ENCODE measurements at regions of chr6 and their contacts with region 1.

Region 1: DNA sequence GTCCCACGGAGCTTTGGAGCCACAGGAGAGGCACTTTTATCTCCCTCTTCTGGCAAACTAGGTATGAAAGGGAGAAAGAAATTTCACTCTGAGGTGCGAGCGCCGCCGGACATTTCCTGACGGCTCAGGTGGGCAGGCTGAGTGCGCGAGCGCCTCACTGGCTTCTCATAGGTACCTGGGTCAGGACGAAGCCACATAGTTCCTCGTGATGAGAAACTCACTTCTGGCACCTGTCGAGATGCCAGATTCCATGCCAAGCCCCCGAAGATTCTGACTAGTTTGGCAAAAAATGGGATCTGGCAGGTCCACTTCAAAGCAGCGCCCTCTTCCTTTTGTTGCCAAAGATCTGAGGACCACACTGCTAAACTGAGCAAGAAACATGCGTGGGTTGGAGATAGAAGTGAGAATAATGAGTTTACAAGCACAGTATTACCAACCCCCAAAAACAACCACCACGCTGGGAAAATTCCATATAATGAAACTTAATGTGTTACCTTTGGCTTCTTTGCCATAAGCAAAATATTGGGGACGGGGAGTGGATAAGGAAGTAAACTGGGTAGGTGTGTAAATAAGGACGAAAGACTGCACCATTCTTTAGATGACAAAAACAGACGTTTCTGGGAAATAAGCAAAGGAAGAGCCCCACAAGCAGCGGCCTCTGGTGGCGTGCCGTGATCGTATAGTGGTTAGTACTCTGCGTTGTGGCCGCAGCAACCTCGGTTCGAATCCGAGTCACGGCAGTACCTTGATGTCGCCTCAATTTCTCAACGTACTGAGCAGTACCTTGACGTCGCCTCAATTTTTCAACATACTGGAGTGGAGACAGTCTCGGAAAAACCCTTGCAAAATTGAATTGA is 89.8 kb upstream of the PRSS16 start:
- DNase-seq: peak; percentile 61
- H3K4me3 ChIP-seq: peak overlapping the region; percentile 56
- H3K27ac ChIP-seq: peak overlapping the region; percentile 28
- H3K4me1 ChIP-seq: peaks cover 45% of the 10 kb centered on the region
- CTCF ChIP-seq: peak; percentile 55

Region 2: GRCh38 chr6:27146706-27147505 is 10.8 kb before region 1 on chr6:
- CTCF ChIA-PET with region 1: interaction called, 4 read pairs
- POLR2A ChIA-PET with region 1: interaction called, 62 read pairs
- intact Hi-C with region 1: no loop called
- DNase-seq: peak; percentile 98
- H3K4me3 ChIP-seq: peak overlapping the region; percentile 73
- H3K27ac ChIP-seq: peak overlapping the region; percentile 99
- H3K4me1 ChIP-seq: peaks cover 60% of the 10 kb centered on the region
- CTCF ChIP-seq: no peak

Region 3: GRCh38 chr6:27251606-27252251 is 94.0 kb after region 1 on chr6:
- CTCF ChIA-PET with region 1: no interaction called
- POLR2A ChIA-PET with region 1: interaction called, 6 read pairs
- intact Hi-C with region 1: loop called (anchors 5 kb)
- DNase-seq: peak; percentile 91
- H3K4me3 ChIP-seq: peak overlapping the region; percentile 80
- H3K27ac ChIP-seq: peak overlapping the region; percentile 22
- H3K4me1 ChIP-seq: peaks cover 15% of the 10 kb centered on the region
- CTCF ChIP-seq: peak; percentile 78

Region 4: GRCh38 chr6:27312146-27312949 is 154.7 kb after region 1 on chr6 and contains the start of gene POM121L2:
- CTCF ChIA-PET with region 1: no interaction called
- POLR2A ChIA-PET with region 1: no interaction called
- intact Hi-C with region 1: loop called (anchors 5 kb)
- DNase-seq: peak; percentile 65
- H3K4me3 ChIP-seq: peak within 1 kb of the TSS; percentile 62
- H3K27ac ChIP-seq: no peak within 1 kb of the TSS
- H3K4me1 ChIP-seq: no peaks in the 10 kb centered on the region
- CTCF ChIP-seq: peak; percentile 83
- total RNA-seq, gene POM121L2: not detected in 2 replicates

Region 5: GRCh38 chr6:27352850-27353249 is 195.2 kb after region 1 on chr6:
- CTCF ChIA-PET with region 1: no interaction called
- POLR2A ChIA-PET with region 1: no interaction called
- intact Hi-C with region 1: no loop called
- DNase-seq: no peak
- H3K4me3 ChIP-seq: no peak overlapping the region
- H3K27ac ChIP-seq: no peak overlapping the region
- H3K4me1 ChIP-seq: no peaks in the 10 kb centered on the region
- CTCF ChIP-seq: no peak

Region 6: GRCh38 chr6:27479319-27480182 is 321.9 kb after region 1 on chr6:
- CTCF ChIA-PET with region 1: no interaction called
- POLR2A ChIA-PET with region 1: interaction called, 3 read pairs
- intact Hi-C with region 1: loop called (anchors 5 kb)
- DNase-seq: peak; percentile 85
- H3K4me3 ChIP-seq: peak overlapping the region; percentile 73
- H3K27ac ChIP-seq: peak overlapping the region; percentile 79
- H3K4me1 ChIP-seq: peaks cover 15% of the 10 kb centered on the region
- CTCF ChIP-seq: no peak

Region 7: GRCh38 chr6:27608916-27609883 is 451.5 kb after region 1 on chr6:
- CTCF ChIA-PET with region 1: no interaction called
- POLR2A ChIA-PET with region 1: no interaction called
- intact Hi-C with region 1: loop called (anchors 5 kb)
- DNase-seq: peak; percentile 51
- H3K4me3 ChIP-seq: no peak overlapping the region
- H3K27ac ChIP-seq: no peak overlapping the region
- H3K4me1 ChIP-seq: no peaks in the 10 kb centered on the region
- CTCF ChIP-seq: peak; percentile 85

Region 8: GRCh38 chr6:27687154-27688013 is 529.7 kb after region 1 on chr6:
- CTCF ChIA-PET with region 1: no interaction called
- POLR2A ChIA-PET with region 1: no interaction called
- intact Hi-C with region 1: loop called (anchors 1 kb)
- DNase-seq: peak; percentile 87
- H3K4me3 ChIP-seq: peak overlapping the region; percentile 67
- H3K27ac ChIP-seq: peak overlapping the region; percentile 41
- H3K4me1 ChIP-seq: no peaks in the 10 kb centered on the region
- CTCF ChIP-seq: peak; percentile 83